Vagina (tissue), 2 donors: ENCODE measurements at regions of chr1 and their contacts with region 1.

Region 1: DNA sequence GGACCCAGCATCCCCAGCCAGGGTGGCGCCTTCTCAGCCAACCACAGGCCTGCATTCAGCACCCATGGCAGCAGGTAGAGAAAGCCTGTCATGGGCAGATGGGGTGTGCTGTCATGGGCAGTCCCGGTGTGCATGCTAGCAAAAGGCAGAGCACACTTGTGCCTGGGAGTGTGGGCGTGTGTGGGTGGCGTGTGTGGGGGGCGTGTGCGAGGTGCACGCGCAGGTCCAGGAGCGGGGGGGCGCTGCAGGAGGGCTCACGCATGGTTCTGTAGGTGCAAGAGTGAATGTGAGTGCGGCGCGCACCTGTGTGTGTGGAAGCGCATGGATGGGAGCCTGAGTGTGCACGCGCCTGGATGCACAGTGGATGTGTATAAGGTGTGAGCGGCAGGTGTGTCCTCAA is 137.2 kb downstream of the CASZ1 start:
- DNase-seq: no peak
- H3K4me3 ChIP-seq: no peak overlapping the region
- H3K27ac ChIP-seq: no peak overlapping the region
- H3K4me1 ChIP-seq: no peaks in the 10 kb centered on the region
- H3K27me3 ChIP-seq: no peaks in the 10 kb centered on the region
- CTCF ChIP-seq: no peak
- POLR2A ChIP-seq: no peak

Region 2: DNA sequence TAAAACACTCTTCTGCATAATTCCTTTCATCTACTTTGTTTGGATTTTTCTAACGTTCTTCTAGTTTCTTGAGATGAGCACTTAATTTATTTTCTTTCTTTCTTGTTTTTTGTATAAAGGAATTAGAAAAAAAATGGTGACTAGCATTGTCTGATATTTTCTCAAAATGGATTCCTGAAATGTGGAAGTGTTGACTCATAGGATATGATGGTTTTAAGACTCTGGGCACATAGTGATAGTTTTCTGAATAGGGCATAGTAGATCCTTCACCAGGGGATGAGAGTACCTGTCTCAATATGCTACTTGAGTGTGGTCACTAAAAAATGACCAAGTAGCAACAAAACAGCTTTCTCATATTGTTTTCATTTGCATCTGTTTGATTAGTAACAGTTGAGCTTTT is 83.6 kb before region 1 on chr1:
- intact Hi-C with region 1: no loop called
- DNase-seq: no peak
- H3K4me3 ChIP-seq: no peak overlapping the region
- H3K27ac ChIP-seq: no peak overlapping the region
- H3K4me1 ChIP-seq: no peaks in the 10 kb centered on the region
- H3K27me3 ChIP-seq: no peaks in the 10 kb centered on the region
- CTCF ChIP-seq: no peak
- POLR2A ChIP-seq: no peak

Region 3: GRCh38 chr1:10625554-10625953 is 33.7 kb before region 1 on chr1:
- intact Hi-C with region 1: no loop called
- DNase-seq: no peak
- H3K4me3 ChIP-seq: no peak overlapping the region
- H3K27ac ChIP-seq: no peak overlapping the region
- H3K4me1 ChIP-seq: no peaks in the 10 kb centered on the region
- H3K27me3 ChIP-seq: no peaks in the 10 kb centered on the region
- CTCF ChIP-seq: no peak
- POLR2A ChIP-seq: no peak

Region 4: GRCh38 chr1:10691740-10692125 is 32.5 kb after region 1 on chr1:
- intact Hi-C with region 1: loop called (anchors 1 kb)
- DNase-seq: no peak
- H3K4me3 ChIP-seq: no peak overlapping the region
- H3K27ac ChIP-seq: peak overlapping the region; percentile 23
- H3K4me1 ChIP-seq: peaks cover 79% of the 10 kb centered on the region
- H3K27me3 ChIP-seq: no peaks in the 10 kb centered on the region
- CTCF ChIP-seq: no peak
- POLR2A ChIP-seq: no peak

Region 5: GRCh38 chr1:10724948-10725847 is 66.0 kb after region 1 on chr1:
- intact Hi-C with region 1: no loop called
- DNase-seq: no peak
- H3K4me3 ChIP-seq: no peak overlapping the region
- H3K27ac ChIP-seq: peak overlapping the region; percentile 33
- H3K4me1 ChIP-seq: peaks cover 32% of the 10 kb centered on the region
- H3K27me3 ChIP-seq: no peaks in the 10 kb centered on the region
- CTCF ChIP-seq: no peak
- POLR2A ChIP-seq: no peak